Ovary (tissue), 10 donors: ENCODE measurements at regions of chr14 and their contacts with region 1.

Region 1: DNA sequence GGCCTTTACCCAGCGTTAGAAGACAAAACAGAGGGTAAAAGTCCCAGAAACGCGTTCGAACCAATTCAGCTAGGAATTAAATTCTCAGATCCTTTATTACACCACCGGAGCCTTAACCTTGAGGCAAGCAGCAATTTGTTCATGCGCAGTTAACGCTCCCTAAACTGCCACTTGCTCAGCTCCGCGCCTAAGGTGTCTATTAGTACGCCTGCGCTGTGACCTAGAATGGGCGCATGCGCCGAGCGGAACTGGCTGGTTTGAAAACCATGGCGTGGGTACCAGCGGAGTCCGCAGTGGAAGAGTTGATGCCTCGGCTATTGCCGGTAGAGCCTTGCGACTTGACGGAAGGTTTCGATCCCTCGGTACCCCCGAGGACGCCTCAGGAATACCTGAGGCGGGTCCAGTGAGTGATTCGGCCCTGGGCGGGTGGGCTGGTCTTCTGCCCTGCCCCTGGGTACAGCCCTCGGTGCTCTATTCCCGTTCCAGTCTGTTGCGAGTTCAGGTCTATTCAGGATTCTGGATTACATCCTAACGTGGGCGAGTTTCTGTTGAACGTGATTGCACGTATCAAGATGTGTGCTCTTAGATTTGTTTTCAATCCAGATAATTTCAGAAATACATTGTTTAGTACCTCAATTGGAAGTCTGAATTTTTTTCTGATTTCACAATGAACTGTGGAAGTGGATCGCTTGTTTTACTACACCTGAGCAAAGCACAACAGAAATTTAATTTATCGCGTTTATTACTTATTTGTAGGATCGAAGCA is at the start of gene GEMIN2:
- DNase-seq: peak; percentile 91 to 95 (median 92)
- H3K4me3 ChIP-seq: peak within 1 kb of the TSS; percentile 54
- H3K27ac ChIP-seq: peak within 1 kb of the TSS; percentile 33 to 52
- H3K4me1 ChIP-seq: peaks cover 1% of the 10 kb centered on the region
- H3K27me3 ChIP-seq: no peaks in the 10 kb centered on the region
- CTCF ChIP-seq: no peak
- EP300 ChIP-seq: no peak
- POLR2A ChIP-seq: peak; percentile 42
- total RNA-seq, gene GEMIN2: 8.8 to 19.8 (median 15.5) TPM

Region 2: GRCh38 chr14:38971255-38971921 is 142.9 kb before region 1 on chr14:
- intact Hi-C with region 1: no loop called
- DNase-seq: no peak
- H3K4me3 ChIP-seq: no peak overlapping the region
- H3K27ac ChIP-seq: no peak overlapping the region
- H3K4me1 ChIP-seq: no peaks in the 10 kb centered on the region
- H3K27me3 ChIP-seq: no peaks in the 10 kb centered on the region
- CTCF ChIP-seq: no peak
- EP300 ChIP-seq: no peak
- POLR2A ChIP-seq: no peak

Region 3: DNA sequence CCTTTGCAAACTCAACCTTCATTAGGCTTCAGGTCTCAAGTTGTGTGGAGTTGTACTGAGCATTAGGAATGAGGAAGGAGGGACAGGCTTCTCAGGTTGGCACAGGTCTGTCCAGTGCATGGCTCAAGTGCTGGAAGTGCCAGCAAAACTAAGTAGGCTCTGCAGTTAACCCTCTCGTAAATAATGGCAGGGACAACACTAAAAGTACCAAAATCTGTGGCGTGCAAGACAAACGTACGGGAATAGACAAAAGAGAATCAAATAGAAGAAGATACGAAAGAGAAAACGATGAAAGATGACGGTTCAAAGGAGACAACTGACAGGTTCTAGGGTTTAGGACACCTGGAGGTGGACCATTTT is 55.3 kb after region 1 on chr14:
- intact Hi-C with region 1: loop called in 1 of 4 experiments (anchors 10 kb)
- DNase-seq: no peak
- H3K4me3 ChIP-seq: peak overlapping the region; percentile 97
- H3K27ac ChIP-seq: peak overlapping the region; percentile 90 to 97
- H3K4me1 ChIP-seq: peaks cover 3% of the 10 kb centered on the region
- H3K27me3 ChIP-seq: no peaks in the 10 kb centered on the region
- CTCF ChIP-seq: no peak
- EP300 ChIP-seq: no peak
- POLR2A ChIP-seq: no peak

Region 4: GRCh38 chr14:39368261-39368959 is 254.2 kb after region 1 on chr14:
- intact Hi-C with region 1: loop called in 1 of 4 experiments (anchors 10 kb)
- DNase-seq: peak; percentile 45 to 70 (median 55)
- H3K4me3 ChIP-seq: no peak overlapping the region
- H3K27ac ChIP-seq: no peak overlapping the region
- H3K4me1 ChIP-seq: no peaks in the 10 kb centered on the region
- H3K27me3 ChIP-seq: no peaks in the 10 kb centered on the region
- CTCF ChIP-seq: no peak
- EP300 ChIP-seq: no peak
- POLR2A ChIP-seq: no peak